ENCODE measurements at regions of chr2 and their contacts with region 1.

Region 1: DNA sequence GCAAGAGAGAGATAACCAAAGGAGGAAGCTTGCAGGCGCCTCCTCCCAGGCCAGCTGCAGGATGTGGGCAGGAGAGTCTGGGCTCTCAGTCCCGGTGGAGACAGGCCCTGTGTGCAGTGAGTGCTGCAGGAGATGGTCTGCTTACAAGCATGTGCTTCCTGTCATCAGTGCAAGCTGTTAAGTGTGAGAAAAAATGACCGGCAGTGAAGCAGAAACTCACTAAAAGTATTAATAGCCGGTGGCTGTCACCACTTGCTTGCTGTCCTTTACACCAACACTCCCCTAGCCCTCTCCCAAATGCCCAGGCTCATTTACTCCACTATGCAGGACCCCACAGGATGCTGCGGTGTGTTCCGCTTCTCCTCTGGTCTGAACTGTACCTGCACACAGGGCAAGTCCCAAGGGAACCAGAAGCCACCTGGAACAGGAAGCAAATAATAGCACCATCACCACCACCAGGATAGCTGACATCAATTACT is 435.6 kb upstream of the HS6ST1 start:
- DNase-seq: no peak
- H3K4me3 ChIP-seq: no peak overlapping the region
- CTCF ChIP-seq: no peak

Region 2: GRCh38 chr2:128770143-128771085 is 16.1 kb after region 1 on chr2:
- CTCF ChIA-PET with region 1: interaction called, 12 read pairs
- POLR2A ChIA-PET with region 1: no interaction called
- DNase-seq: no peak
- H3K4me3 ChIP-seq: no peak overlapping the region
- CTCF ChIP-seq: no peak

Region 3: DNA sequence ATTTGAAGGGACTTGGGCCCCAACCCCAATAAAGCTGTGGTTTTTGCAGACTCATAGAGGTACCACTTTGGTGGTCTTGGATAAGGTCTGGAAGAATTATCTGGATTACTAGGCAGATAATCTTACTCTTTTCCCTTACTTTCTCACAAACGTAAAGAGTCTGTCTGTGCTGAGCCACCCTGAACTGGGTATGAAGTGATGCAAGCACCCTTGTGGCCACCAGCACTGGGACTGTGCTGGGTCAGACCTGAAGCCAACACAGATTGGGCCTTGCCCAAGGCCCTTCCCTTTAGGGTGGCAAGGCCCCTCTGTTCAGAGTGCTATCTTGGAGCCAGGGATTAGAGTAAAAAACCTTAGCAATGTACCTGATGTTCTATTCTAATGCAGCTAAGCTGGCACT is 398.2 kb after region 1 on chr2:
- CTCF ChIA-PET with region 1: no interaction called
- POLR2A ChIA-PET with region 1: no interaction called
- DNase-seq: no peak
- H3K4me3 ChIP-seq: no peak overlapping the region
- CTCF ChIP-seq: no peak

Measured in AG04449 (cell line).